GM12878 (cell line): ENCODE measurements at regions of chr9 and their contacts with region 1.

Region 1: DNA sequence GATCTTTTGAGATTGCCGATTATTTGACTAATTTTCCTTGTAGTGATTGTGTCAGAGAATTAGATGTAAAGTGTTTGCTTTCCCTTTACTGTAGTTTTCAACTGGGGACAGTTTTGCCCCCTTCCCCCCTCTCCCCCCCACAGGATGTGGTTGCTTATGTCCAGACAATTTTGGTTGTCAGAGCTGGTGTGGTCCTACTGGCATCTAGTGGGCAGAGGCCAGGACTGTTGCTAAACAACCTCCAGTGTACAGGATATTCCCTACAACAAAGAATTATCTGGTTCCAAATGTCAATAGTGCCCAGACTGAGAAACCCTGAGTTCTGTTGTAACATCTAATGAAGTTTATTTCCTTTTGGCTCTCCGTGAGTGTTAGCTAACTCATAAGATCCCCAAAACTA is 20.0 kb downstream of the TMEFF1 start:
- DNase-seq: no peak
- ATAC-seq: peak; percentile 51
- H3K4me3 ChIP-seq: no peak overlapping the region
- H3K27ac ChIP-seq: no peak overlapping the region
- H3K4me1 ChIP-seq: no peaks in the 10 kb centered on the region
- H3K27me3 ChIP-seq: no peaks in the 10 kb centered on the region
- CTCF ChIP-seq: peak in 2 of 3 experiments; percentile 9 to 15; a peak in 1 of 6 replicates
- EP300 ChIP-seq: no peak
- POLR2A ChIP-seq: no peak
- RAD21 ChIP-seq: peak; percentile 49

Region 2: DNA sequence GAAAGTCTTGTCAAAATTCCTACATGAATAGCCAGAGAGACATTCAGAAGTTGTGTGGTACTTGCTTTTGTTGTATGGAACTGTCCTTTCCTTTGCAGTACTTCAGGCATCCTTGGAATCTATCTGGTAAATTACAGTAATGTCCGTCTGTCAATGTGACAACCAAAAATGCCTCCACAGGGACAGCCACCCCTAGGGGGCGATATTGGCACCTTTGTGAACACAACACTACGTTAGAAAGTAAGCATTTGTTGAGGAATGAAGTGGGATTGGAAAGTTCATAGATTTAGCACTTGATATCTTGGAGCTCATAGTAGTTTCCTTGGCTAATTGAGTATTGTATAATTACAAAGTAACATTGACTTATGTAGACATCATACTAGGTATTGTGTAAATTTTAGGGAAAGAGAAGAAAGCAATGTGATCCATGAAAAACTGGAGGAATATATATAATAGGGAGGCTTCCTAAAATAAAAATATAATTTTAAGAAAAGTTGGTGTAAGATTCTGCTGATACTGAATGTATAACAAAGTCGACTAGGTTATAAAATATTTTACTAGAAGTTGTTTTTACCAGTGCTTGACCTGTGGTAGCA is 12.7 kb after region 1 on chr9:
- CTCF ChIA-PET with region 1: interaction called, 14 read pairs
- POLR2A ChIA-PET with region 1: no interaction called
- RAD21 ChIA-PET with region 1: no interaction called
- SMC1A ChIA-PET with region 1: interaction called, 4 read pairs
- in situ Hi-C with region 1: no loop called
- intact Hi-C with region 1: no loop called
- DNase-seq: peak; percentile 16
- ATAC-seq: peak; percentile 82
- H3K4me3 ChIP-seq: no peak overlapping the region
- H3K27ac ChIP-seq: no peak overlapping the region
- H3K4me1 ChIP-seq: no peaks in the 10 kb centered on the region
- H3K27me3 ChIP-seq: no peaks in the 10 kb centered on the region
- CTCF ChIP-seq: peak; percentile 72 to 92 (median 74)
- EP300 ChIP-seq: no peak
- POLR2A ChIP-seq: no peak
- RAD21 ChIP-seq: peak; percentile 58

Region 3: DNA sequence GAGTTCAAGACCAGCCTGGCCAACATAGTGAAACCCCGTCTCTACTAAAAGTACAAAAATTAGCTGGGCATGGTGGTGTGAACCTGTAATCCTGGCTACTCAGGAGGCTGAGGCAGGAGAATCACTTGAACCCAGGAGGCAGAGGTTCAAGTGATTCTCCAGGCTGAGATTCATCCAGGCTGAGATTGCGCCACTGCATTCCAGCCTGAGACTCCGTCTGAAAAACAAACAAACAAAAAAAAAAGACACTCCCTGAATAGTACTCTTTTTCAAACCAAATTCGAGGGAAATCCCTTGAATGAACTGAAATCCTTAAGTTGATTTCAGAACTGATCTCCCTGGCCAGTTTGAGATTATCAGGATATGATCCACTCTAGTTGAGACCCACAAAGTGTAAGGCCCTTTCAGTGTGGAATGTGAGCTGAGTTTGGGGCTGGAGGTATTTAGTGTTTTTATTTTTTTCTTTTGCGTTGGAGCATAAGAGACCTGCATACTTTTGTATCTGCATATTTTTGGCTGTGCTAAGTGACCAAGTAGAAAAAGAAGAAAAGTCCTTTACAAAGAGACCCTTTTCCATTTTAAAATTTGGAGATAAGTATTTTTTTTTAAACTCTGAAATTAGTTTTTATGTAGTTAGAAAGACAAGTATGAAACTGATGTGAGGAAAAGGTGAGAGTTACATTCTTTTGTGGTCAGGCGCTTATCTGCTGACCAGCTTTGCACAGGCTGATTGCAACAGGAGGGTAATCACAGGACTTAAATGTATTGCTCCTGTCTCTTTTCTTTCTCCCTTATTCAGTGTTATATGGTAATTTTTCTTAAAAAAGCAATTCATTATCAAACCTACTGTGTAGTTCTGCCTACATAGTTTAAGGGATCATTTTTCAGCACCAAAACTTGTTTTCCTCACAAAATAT is 22.9 kb after region 1 on chr9:
- CTCF ChIA-PET with region 1: no interaction called
- POLR2A ChIA-PET with region 1: no interaction called
- RAD21 ChIA-PET with region 1: no interaction called
- SMC1A ChIA-PET with region 1: no interaction called
- in situ Hi-C with region 1: no loop called
- intact Hi-C with region 1: no loop called
- DNase-seq: no peak
- ATAC-seq: no peak
- H3K4me3 ChIP-seq: no peak overlapping the region
- H3K27ac ChIP-seq: no peak overlapping the region
- H3K4me1 ChIP-seq: no peaks in the 10 kb centered on the region
- H3K27me3 ChIP-seq: no peaks in the 10 kb centered on the region
- CTCF ChIP-seq: no peak
- EP300 ChIP-seq: no peak
- POLR2A ChIP-seq: no peak
- RAD21 ChIP-seq: no peak